Prostate gland (tissue), 2 donors: ENCODE measurements at regions of chr11 and their contacts with region 1.

Region 1: GRCh38 chr11:16613512-16614381 is 124.7 kb upstream of the C11orf58 start:
- DNase-seq: peak; percentile 81
- H3K4me3 ChIP-seq: peak overlapping the region in 1 of 2 donors; percentile 22
- H3K27ac ChIP-seq: no peak overlapping the region
- H3K4me1 ChIP-seq: peaks cover 5% of the 10 kb centered on the region
- H3K27me3 ChIP-seq: peaks cover 28% of the 10 kb centered on the region
- CTCF ChIP-seq: peak; percentile 40 to 87 (median 79)
- POLR2A ChIP-seq: no peak

Region 2: DNA sequence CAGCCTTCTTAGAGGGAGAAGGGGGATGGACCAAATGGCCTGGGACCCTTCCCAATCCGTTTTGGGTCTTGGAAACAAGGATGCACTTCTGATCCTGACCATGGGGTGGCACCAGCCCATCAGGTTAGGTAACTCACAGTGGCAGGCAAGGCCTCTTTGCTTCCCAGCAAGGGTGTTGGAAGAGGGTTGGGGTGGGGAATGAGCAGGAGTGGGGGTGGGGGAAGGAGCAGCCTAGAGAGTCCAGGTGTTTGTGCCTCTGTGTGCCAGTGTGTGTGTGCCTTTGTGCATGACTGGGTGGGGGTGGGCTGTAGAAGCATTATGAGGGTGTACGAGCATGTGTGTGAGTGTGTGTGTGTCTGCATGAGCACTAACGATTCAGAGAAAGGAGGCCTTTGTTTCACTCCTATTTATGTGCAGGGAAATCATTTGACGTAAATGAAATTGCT is 1285.9 kb before region 1 on chr11:
- intact Hi-C with region 1: loop called (anchors 5 kb)
- DNase-seq: peak; percentile 59
- H3K4me3 ChIP-seq: no peak overlapping the region
- H3K27ac ChIP-seq: no peak overlapping the region
- H3K4me1 ChIP-seq: no peaks in the 10 kb centered on the region
- H3K27me3 ChIP-seq: no peaks in the 10 kb centered on the region
- CTCF ChIP-seq: peak; percentile 47 to 70 (median 62)
- POLR2A ChIP-seq: no peak

Region 3: GRCh38 chr11:15826826-15827225 is 786.9 kb before region 1 on chr11:
- intact Hi-C with region 1: loop called (anchors 5 kb)
- DNase-seq: no peak
- H3K4me3 ChIP-seq: no peak overlapping the region
- H3K27ac ChIP-seq: no peak overlapping the region
- H3K4me1 ChIP-seq: no peaks in the 10 kb centered on the region
- H3K27me3 ChIP-seq: no peaks in the 10 kb centered on the region
- CTCF ChIP-seq: peak; percentile 12 to 44 (median 36)
- POLR2A ChIP-seq: no peak

Region 4: GRCh38 chr11:16511116-16512114 is 102.3 kb before region 1 on chr11:
- intact Hi-C with region 1: no loop called
- DNase-seq: no peak
- H3K4me3 ChIP-seq: no peak overlapping the region
- H3K27ac ChIP-seq: no peak overlapping the region
- H3K4me1 ChIP-seq: no peaks in the 10 kb centered on the region
- H3K27me3 ChIP-seq: no peaks in the 10 kb centered on the region
- CTCF ChIP-seq: no peak
- POLR2A ChIP-seq: no peak

Region 5: GRCh38 chr11:16727806-16728205 is 114.1 kb after region 1 on chr11:
- intact Hi-C with region 1: no loop called
- DNase-seq: no peak
- H3K4me3 ChIP-seq: no peak overlapping the region
- H3K27ac ChIP-seq: no peak overlapping the region
- H3K4me1 ChIP-seq: no peaks in the 10 kb centered on the region
- H3K27me3 ChIP-seq: no peaks in the 10 kb centered on the region
- CTCF ChIP-seq: no peak
- POLR2A ChIP-seq: no peak